ENCODE measurements at regions of chrX and their contacts with region 1.

Region 1: DNA sequence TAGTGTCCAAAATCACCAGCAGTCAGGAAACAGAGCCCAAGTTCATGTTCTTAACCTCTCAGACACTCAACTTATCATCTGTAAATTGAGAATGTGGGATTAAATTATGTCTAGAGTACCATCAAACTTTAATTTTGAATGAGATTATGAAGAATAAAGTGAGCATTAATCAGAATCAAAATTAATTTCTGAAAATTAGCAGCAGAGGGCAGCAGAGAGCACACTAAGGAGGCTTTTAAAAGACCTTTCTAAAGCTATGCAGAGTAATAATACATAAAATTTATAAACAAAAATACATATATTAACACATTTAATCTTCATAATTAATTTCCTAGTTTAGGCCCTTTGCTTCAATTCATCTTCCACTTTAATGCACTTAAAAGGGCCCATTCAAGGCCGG is 7.1 kb downstream of the TASL start:
- H3K4me3 ChIP-seq: no peak overlapping the region
- H3K27ac ChIP-seq: no peak overlapping the region
- H3K4me1 ChIP-seq: no peaks in the 10 kb centered on the region
- CTCF ChIP-seq: no peak

Region 2: GRCh38 chrX:30713061-30713525 is 142.6 kb after region 1 on chrX:
- CTCF ChIA-PET with region 1: interaction called, 12 read pairs
- POLR2A ChIA-PET with region 1: no interaction called
- H3K4me3 ChIP-seq: no peak overlapping the region
- H3K27ac ChIP-seq: no peak overlapping the region
- H3K4me1 ChIP-seq: no peaks in the 10 kb centered on the region
- CTCF ChIP-seq: no peak; the same call in 1 of the 2 replicates

Region 3: DNA sequence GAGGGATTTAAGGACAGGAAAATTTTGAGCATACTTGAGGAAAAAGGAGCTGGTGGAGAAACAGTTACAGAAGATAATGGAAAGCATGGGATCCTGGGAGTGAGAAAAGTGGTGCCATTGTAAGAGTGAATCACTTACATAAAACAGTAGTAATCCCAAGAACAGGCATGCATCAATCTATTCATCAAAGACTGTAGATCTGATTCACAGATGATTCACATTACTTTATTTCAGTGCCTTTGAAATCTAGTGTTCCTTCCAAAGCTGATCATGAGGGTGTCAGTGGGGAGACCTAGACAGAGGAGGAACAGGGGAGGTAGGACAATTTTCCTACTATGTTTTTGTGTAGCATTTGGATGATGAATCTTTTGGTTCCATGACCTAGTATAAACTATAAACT is 215.9 kb after region 1 on chrX:
- CTCF ChIA-PET with region 1: no interaction called
- POLR2A ChIA-PET with region 1: no interaction called
- H3K4me3 ChIP-seq: no peak overlapping the region
- H3K27ac ChIP-seq: no peak overlapping the region
- H3K4me1 ChIP-seq: no peaks in the 10 kb centered on the region
- CTCF ChIP-seq: no peak

Measured in HEK293 (cell line).